Activated CD4-positive, alpha-beta T cell treated with anti-CD3 and anti-CD28 coated beads, Interleukin-2, amount 10 ng/mL, durations not matched to agents 24 days and 14 days (primary cell): ENCODE measurements at regions of chr3 and their contacts with region 1.

Region 1: GRCh38 chr3:133644768-133645167 is 17.0 kb downstream of the TOPBP1 start:
- DNase-seq: no peak
- H3K4me3 Mint-ChIP-seq: no peak overlapping the region
- H3K27ac Mint-ChIP-seq: no peak overlapping the region
- H3K4me1 Mint-ChIP-seq: peaks cover 6% of the 10 kb centered on the region
- H3K27me3 Mint-ChIP-seq: no peaks in the 10 kb centered on the region

Region 2: DNA sequence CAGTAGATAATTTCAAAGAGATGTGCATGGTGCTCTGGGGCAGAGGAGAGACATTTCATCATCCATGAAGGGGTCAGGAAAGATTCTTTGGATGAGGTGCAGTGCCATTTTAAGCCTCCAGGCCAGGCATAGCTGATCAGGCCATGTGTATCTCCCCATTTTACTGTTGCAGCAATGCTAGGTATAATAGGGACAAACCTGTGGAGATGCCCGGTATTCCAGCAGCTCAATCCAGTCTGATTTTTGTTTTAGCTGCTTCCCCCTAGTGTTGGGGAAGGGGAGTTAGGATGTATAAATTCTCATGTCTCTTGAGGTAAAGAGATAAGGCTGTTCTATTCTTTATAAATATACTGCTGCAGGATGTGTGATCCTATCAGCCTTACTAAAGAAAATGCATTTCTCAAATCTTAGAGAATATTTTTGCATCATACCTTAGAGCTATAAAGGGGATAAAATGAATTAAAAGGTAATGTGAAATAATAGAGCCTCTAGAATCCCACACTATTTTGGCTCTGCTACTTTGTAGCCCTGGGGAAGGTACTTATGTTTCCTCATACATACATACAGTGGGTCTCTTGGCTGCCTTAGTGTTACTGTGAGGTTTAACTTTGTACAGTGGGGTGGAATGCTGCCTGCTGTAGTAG is 66.1 kb before region 1 on chr3:
- intact Hi-C with region 1: loop called (anchors 5 kb)
- DNase-seq: no peak
- H3K4me3 Mint-ChIP-seq: peak overlapping the region; percentile 78
- H3K27ac Mint-ChIP-seq: no peak overlapping the region
- H3K4me1 Mint-ChIP-seq: peaks cover 47% of the 10 kb centered on the region
- H3K27me3 Mint-ChIP-seq: no peaks in the 10 kb centered on the region

Region 3: DNA sequence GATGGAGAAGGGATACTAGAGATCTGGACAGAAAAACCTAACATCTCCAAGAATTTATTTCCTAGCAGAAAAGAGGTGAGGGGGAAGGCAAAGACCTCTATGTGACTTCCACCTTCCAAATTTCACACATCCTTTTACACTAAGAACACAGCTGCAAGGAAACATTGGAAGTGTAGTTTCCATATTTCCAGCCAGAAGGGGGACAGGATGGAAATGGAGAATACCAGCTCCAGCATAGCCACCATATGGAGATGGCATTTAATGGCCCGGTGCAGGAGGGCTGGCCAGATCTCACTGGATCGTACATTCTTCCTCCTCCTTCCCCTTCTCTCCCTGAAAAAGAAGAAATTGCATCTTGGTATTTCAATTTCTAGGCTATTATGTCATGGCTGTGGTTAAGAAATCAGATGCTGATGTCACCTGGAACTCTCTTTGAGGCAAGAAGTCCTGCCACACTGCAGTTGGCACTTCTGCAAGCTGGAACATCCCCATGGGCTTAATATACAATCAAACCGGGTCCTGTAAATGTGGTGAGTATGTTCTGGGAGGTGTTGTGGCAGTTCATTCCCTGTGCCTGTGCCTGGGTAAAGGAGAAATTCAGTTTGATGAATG is 64.5 kb after region 1 on chr3:
- intact Hi-C with region 1: no loop called
- DNase-seq: peak; percentile 31
- H3K4me3 Mint-ChIP-seq: no peak overlapping the region
- H3K27ac Mint-ChIP-seq: no peak overlapping the region
- H3K4me1 Mint-ChIP-seq: no peaks in the 10 kb centered on the region
- H3K27me3 Mint-ChIP-seq: peaks cover 15% of the 10 kb centered on the region